ENCODE measurements at regions of chr18 and their contacts with region 1.

Region 1: GRCh38 chr18:31722369-31722957 is 38.1 kb upstream of the B4GALT6 start:
- DNase-seq: peak; percentile 18
- H3K4me3 ChIP-seq: no peak overlapping the region
- H3K27ac ChIP-seq: no peak overlapping the region
- H3K27me3 ChIP-seq: peaks cover 6% of the 10 kb centered on the region
- CTCF ChIP-seq: peak; percentile 81

Region 2: DNA sequence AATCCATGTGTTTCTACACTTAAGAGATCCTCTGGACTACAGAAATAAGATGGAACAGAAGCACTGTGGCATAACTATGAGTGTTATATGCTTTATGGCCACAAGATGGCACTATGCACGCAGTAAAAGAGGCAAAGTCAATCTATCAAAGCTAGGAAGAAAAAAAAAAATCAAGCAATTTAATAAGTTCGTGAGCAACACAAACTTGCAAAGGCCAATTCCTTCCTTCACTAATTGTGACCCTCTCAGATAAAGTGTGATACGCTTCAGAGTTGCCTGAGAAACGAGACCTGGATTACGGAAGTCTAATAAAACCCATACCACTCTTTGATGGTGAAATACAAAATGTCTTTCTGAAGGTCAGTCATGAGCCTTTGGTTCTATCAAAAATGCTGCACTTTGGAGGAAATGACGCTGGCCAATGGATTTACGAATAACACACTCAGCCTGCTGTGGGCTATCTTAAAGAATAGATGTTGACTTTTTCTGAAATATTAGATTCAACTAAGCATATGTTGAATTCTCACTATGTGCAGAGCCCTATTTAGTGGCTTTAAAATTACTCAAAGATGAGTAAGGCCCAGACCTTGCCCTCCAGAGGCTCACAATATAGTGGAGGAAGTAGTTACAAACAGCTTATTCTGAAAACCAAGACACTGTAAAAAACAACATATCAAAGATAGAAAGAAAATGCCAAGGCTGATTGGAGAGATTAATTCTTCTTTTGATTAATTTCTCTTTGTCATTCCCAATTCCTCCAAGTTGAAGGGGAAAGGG is 166.3 kb before region 1 on chr18:
- CTCF ChIA-PET with region 1: interaction called, 24 read pairs
- POLR2A ChIA-PET with region 1: no interaction called
- DNase-seq: peak; percentile 16
- H3K4me3 ChIP-seq: no peak overlapping the region
- H3K27ac ChIP-seq: no peak overlapping the region
- H3K27me3 ChIP-seq: no peaks in the 10 kb centered on the region
- CTCF ChIP-seq: peak; percentile 81

Region 3: DNA sequence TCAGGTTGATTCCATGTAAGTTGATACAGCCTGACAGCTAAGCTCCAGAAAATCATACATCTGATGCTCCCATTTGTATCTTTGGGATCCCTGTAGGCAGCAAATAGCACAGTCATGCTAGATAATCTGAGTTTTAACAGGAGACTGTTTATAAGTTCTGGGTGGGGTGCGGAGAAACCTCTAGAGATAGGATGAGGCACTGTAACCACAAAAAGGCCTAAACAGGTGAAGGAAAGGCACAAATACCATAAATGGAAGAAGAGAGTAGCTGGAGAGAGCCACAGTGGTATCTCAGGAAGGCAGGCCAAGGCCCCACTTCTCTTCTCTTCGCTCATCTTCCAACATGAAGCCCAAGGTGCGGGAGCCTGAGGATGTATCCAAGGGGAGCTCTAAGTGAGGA is 20.0 kb before region 1 on chr18:
- CTCF ChIA-PET with region 1: interaction called, 11 read pairs
- POLR2A ChIA-PET with region 1: no interaction called
- DNase-seq: no peak
- H3K4me3 ChIP-seq: no peak overlapping the region
- H3K27ac ChIP-seq: no peak overlapping the region
- H3K27me3 ChIP-seq: no peaks in the 10 kb centered on the region
- CTCF ChIP-seq: no peak

Region 4: GRCh38 chr18:32018331-32019250 is 296.1 kb after region 1 on chr18 and contains the start of gene RNF125:
- CTCF ChIA-PET with region 1: no interaction called
- POLR2A ChIA-PET with region 1: no interaction called
- DNase-seq: peak; percentile 23
- H3K4me3 ChIP-seq: peak within 1 kb of the TSS; percentile 62
- H3K27ac ChIP-seq: no peak within 1 kb of the TSS
- H3K27me3 ChIP-seq: peaks cover 7% of the 10 kb centered on the region
- CTCF ChIP-seq: no peak
- polyA plus RNA-seq, gene RNF125: 0.37 and 0.41 TPM in 2 replicates